ENCODE measurements at regions of chr9 and their contacts with region 1.

Region 1: GRCh38 chr9:73919712-73920111 is 577.4 kb upstream of the RORB start:
- DNase-seq: no peak
- ATAC-seq: no peak
- H3K4me3 ChIP-seq: no peak overlapping the region
- H3K27ac ChIP-seq: no peak overlapping the region
- H3K4me1 ChIP-seq: no peaks in the 10 kb centered on the region
- H3K27me3 ChIP-seq: no peaks in the 10 kb centered on the region
- CTCF ChIP-seq: no peak
- EP300 ChIP-seq: no peak
- POLR2A ChIP-seq: no peak
- RAD21 ChIP-seq: no peak

Region 2: DNA sequence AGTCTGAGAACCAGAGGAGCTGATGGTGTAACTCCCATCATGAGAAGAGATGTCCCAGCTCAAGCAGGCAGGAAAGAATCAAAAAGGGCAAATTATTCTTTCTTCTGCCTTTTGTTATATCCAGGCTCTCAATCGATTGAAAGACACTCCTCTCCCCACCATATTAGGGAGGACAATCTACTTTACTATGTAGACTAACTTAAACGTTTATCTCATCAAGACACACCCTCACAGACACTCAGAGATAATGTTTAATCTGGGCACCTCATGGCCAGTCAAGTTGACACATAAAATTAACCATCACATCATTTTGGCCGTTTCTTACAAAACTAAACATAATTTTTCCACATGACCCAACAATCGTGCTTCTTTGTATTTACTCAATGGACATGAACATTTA is 43.1 kb after region 1 on chr9:
- CTCF ChIA-PET with region 1: no interaction called
- POLR2A ChIA-PET with region 1: no interaction called
- in situ Hi-C with region 1: no loop called
- intact Hi-C with region 1: loop called (anchors 2 kb)
- DNase-seq: peak in 2 of 4 experiments; percentile 7 to 47
- ATAC-seq: peak; percentile 79
- H3K4me3 ChIP-seq: no peak overlapping the region
- H3K27ac ChIP-seq: peak overlapping the region; percentile 45; the same call in 1 of the 3 replicates
- H3K4me1 ChIP-seq: peaks cover 0 to 8% of the 10 kb centered on the region in 2 experiments; a peak in 3 of 5 replicates
- H3K27me3 ChIP-seq: no peaks in the 10 kb centered on the region
- CTCF ChIP-seq: no peak
- EP300 ChIP-seq: peak; percentile 60
- POLR2A ChIP-seq: no peak
- RAD21 ChIP-seq: no peak

Region 3: GRCh38 chr9:74066128-74066527 is 146.4 kb after region 1 on chr9:
- CTCF ChIA-PET with region 1: no interaction called
- POLR2A ChIA-PET with region 1: no interaction called
- in situ Hi-C with region 1: no loop called
- intact Hi-C with region 1: no loop called
- DNase-seq: no peak
- ATAC-seq: no peak
- H3K4me3 ChIP-seq: no peak overlapping the region
- H3K27ac ChIP-seq: no peak overlapping the region
- H3K4me1 ChIP-seq: no peaks in the 10 kb centered on the region
- H3K27me3 ChIP-seq: no peaks in the 10 kb centered on the region
- CTCF ChIP-seq: no peak
- EP300 ChIP-seq: no peak
- POLR2A ChIP-seq: no peak
- RAD21 ChIP-seq: no peak

Measured in K562 (cell line).